ENCODE measurements at regions of chr6 and their contacts with region 1.

Region 1: DNA sequence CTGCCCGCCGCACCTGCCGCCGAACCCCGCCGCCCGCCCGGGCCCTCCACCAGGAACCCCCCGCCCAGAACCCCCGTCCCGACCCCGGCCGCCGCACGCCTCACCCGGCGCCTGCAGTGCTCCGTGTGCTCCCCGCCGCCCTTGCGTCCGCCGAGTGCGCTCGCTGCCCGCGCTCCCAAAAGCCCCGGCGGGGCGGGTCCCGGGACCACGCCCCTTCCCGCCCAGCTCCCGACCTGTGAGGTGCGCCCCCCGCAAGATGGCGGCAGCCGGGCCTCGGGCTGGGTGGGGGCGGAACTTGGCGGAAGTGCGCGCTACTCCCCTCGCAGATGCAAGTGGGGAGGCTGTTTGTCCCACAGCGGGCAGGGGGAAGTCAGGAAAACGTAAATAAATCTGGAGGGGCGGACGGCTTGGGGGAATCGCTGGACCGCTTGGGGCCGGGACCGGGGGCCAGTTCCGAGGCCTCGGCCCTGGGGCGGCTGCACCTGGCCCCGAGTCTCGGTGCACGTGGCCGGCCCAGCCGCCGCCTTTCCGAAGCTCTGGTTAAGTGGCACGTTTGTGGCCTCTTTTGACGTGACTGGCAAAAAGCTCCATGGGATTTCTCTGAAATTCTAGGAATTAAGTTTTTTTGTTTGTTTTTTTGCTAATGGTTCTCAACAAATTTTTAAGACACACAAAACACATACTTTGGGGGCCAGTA is at the start of gene EZR:
- DNase-seq: peak; percentile 63 to 75
- H3K4me3 ChIP-seq: peak within 1 kb of the TSS; percentile 86
- H3K27ac ChIP-seq: peak within 1 kb of the TSS; percentile 92
- H3K4me1 ChIP-seq: peaks cover 30% of the 10 kb centered on the region
- H3K27me3 ChIP-seq: no peaks in the 10 kb centered on the region
- CTCF ChIP-seq: peak; percentile 37; the same call in 1 of the 2 replicates
- total RNA-seq, gene EZR: 231 and 240 TPM in 2 replicates

Region 2: DNA sequence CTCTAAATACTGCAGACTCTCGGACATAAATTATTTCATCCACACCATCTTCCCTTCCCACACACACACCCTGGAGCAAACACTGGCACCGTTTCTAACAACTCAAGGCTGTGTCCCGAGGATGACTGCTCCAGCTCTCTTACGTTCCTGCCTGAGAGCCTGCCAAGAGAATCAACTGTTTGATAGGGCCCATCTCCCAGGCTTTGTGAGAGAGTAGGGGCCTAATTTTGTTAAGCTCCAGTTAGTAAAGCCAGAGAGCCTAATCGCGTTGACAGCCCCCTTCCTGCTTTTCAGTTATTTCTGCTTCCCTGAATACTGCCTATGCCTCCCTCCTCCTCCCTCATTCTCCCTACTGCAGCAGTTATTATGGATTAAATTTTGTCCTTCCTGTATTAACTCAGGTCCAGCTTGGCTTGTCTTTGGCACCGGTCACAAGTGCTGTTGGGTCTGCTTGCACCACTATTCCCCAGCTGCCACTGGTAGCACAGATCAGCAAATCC is 377.6 kb before region 1 on chr6:
- CTCF ChIA-PET with region 1: no interaction called
- POLR2A ChIA-PET with region 1: no interaction called
- intact Hi-C with region 1: no loop called
- DNase-seq: no peak
- H3K4me3 ChIP-seq: no peak overlapping the region
- H3K27ac ChIP-seq: no peak overlapping the region
- H3K4me1 ChIP-seq: no peaks in the 10 kb centered on the region
- H3K27me3 ChIP-seq: no peaks in the 10 kb centered on the region
- CTCF ChIP-seq: no peak

Region 3: DNA sequence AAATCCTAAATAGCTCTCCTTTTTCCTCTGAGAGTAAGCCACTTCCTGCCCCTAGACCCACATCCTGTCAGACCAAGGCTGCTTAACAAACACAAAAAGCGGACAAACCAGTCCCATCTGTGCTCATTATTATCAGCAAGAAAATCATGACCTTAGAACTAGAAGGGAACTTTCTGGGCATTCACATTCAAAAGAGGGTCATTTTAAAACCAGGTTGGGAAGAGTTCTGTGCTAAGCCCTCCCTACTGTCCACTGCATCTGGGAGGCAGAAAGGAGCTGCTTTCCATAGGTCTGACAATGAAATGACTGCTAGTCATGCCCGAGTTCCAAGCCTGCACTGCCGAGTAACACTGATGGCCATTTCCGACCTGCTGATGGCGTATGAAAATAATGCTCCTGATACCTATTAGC is 15.6 kb before region 1 on chr6:
- CTCF ChIA-PET with region 1: no interaction called
- POLR2A ChIA-PET with region 1: interaction called, 10 read pairs
- intact Hi-C with region 1: no loop called
- DNase-seq: peak; percentile 46 to 95
- H3K4me3 ChIP-seq: peak overlapping the region; percentile 45
- H3K27ac ChIP-seq: peak overlapping the region; percentile 74
- H3K4me1 ChIP-seq: peaks cover 96% of the 10 kb centered on the region
- H3K27me3 ChIP-seq: no peaks in the 10 kb centered on the region
- CTCF ChIP-seq: no peak

Region 4: DNA sequence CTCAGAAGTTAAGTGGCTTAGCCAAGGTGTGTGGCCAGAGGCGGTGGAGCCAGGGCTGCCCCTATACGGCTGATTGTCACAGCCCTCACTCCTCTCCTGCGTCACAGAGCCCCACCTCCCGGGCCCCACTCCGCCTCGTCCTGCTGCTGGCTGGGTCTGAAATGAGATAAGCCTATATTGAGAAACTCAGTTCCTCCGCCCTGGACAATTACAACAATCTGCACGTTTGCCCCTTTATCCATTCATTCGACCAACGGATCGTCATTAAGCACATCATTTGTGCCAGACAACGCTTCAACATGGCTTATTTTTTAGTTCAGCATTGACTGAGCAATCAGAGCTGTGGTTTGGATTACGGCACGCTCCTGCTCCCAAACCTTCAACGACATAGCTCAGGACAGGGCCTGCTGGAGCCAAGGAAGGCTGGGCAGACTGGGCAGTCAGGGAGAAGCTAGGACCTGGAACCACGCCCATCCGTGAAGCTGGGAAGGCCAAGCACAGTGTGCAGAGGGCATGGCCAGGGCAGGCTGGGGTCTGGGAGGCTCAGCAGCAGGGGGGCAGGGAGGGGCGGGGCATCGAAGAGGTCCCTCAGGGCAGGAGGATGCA is 16.4 kb after region 1 on chr6:
- CTCF ChIA-PET with region 1: no interaction called
- POLR2A ChIA-PET with region 1: interaction called, 10 read pairs
- intact Hi-C with region 1: no loop called
- DNase-seq: peak; percentile 80 to 94
- H3K4me3 ChIP-seq: peak overlapping the region; percentile 54
- H3K27ac ChIP-seq: peak overlapping the region; percentile 87
- H3K4me1 ChIP-seq: peaks cover 56% of the 10 kb centered on the region
- H3K27me3 ChIP-seq: no peaks in the 10 kb centered on the region
- CTCF ChIP-seq: no peak

Region 5: DNA sequence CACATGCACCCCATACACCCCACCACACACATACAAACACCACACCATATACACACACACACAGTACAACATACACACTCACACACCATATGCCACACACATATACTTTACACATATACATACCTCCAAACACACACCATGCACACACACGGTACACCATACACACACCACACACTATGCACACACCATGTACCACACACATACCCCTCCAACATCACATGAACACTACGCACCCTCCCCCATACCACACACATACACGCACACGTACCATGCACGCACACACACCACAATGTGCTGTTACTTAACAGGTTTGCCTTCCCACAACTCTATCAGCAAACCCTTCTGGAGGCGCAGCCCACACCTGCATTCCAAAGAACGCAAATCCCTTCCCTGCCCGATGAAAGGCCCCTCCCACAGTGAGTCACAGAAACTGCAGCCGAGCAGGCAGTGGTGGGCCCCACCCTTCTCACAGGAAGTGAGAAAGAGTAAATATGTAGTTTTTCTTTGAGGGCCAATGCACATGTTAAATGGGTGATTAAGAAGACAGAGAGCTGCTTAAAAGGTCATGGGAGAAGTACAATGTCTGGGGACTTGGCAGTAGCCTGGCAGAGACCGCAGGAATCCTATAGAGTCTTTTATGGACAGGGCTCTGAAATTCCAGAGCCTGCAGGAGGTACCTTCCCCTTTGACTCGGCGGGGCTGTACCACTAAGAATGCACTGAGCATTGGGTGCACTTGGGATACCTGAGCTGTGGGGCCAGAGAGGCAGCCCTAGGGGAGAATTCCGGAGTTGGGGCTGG is 33.9 kb after region 1 on chr6:
- CTCF ChIA-PET with region 1: no interaction called
- POLR2A ChIA-PET with region 1: interaction called, 19 read pairs
- intact Hi-C with region 1: loop called (anchors 1 kb)
- DNase-seq: peak; percentile 92 to 100
- H3K4me3 ChIP-seq: peak overlapping the region; percentile 51
- H3K27ac ChIP-seq: peak overlapping the region; percentile 99
- H3K4me1 ChIP-seq: peaks cover 93% of the 10 kb centered on the region
- H3K27me3 ChIP-seq: no peaks in the 10 kb centered on the region
- CTCF ChIP-seq: no peak

Region 6: GRCh38 chr6:158869826-158870648 is 50.7 kb after region 1 on chr6:
- CTCF ChIA-PET with region 1: no interaction called
- POLR2A ChIA-PET with region 1: interaction called, 34 read pairs
- intact Hi-C with region 1: loop called (anchors 1 kb)
- DNase-seq: peak; percentile 87 to 99
- H3K4me3 ChIP-seq: peak overlapping the region; percentile 52
- H3K27ac ChIP-seq: peak overlapping the region; percentile 98
- H3K4me1 ChIP-seq: peaks cover 48% of the 10 kb centered on the region
- H3K27me3 ChIP-seq: no peaks in the 10 kb centered on the region
- CTCF ChIP-seq: peak; percentile 33; the same call in 1 of the 2 replicates

Region 7: GRCh38 chr6:158972241-158973233 is 153.2 kb after region 1 on chr6:
- CTCF ChIA-PET with region 1: no interaction called
- POLR2A ChIA-PET with region 1: no interaction called
- intact Hi-C with region 1: loop called (anchors 1 kb)
- DNase-seq: peak; percentile 4 to 60
- H3K4me3 ChIP-seq: no peak overlapping the region
- H3K27ac ChIP-seq: peak overlapping the region; percentile 42
- H3K4me1 ChIP-seq: peaks cover 6% of the 10 kb centered on the region
- H3K27me3 ChIP-seq: no peaks in the 10 kb centered on the region
- CTCF ChIP-seq: peak; percentile 82